Activated CD8-positive, alpha-beta T cell treated with anti-CD3 and anti-CD28 coated beads for 36 hours (primary cell): ENCODE measurements at regions of chr3 and their contacts with region 1.

Region 1: GRCh38 chr3:3998140-3998922 is 199.1 kb downstream of the LRRN1 start:
- DNase-seq: peak; percentile 47
- ATAC-seq: peak; percentile 60
- H3K4me3 Mint-ChIP-seq: no peak overlapping the region
- H3K27ac Mint-ChIP-seq: no peak overlapping the region
- H3K4me1 Mint-ChIP-seq: no peaks in the 10 kb centered on the region
- H3K27me3 Mint-ChIP-seq: no peaks in the 10 kb centered on the region
- CTCF ChIP-seq: peak; percentile 86

Region 2: DNA sequence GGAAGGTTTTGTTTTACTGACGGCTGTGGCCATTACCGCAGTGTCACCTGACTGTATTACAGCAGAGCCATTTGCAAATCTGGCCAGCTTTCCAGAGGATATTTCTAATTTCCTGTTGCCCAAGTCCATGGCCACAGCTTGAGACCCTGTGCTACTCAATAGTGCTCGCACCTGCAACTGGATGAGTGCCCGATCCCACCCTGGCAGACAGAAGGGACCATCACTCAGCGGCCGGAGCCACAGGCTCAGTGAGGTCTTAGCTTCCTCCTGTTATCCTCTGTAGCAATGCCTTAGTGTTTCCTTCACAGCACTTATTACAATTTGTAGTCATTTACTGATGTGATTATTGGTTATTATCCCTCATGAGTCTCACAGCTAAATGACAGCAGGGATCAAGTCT is 14.3 kb before region 1 on chr3:
- CTCF ChIA-PET with region 1: interaction called, 14 read pairs
- POLR2A ChIA-PET with region 1: no interaction called
- intact Hi-C with region 1: no loop called
- DNase-seq: no peak
- ATAC-seq: no peak
- H3K4me3 Mint-ChIP-seq: no peak overlapping the region
- H3K27ac Mint-ChIP-seq: no peak overlapping the region
- H3K4me1 Mint-ChIP-seq: no peaks in the 10 kb centered on the region
- H3K27me3 Mint-ChIP-seq: no peaks in the 10 kb centered on the region
- CTCF ChIP-seq: no peak